ENCODE measurements at regions of chr1 and their contacts with region 1.

Region 1: GRCh38 chr1:226547754-226548191 is 791 bp upstream of the STUM start:
- DNase-seq: peak; percentile 85
- CTCF ChIP-seq: peak; percentile 89

Region 2: GRCh38 chr1:226453015-226453704 is 94.6 kb before region 1 on chr1:
- CTCF ChIA-PET with region 1: no interaction called
- POLR2A ChIA-PET with region 1: no interaction called
- DNase-seq: no peak
- CTCF ChIP-seq: no peak

Region 3: GRCh38 chr1:226535666-226536065 is 12.1 kb before region 1 on chr1:
- CTCF ChIA-PET with region 1: interaction called, 13 read pairs
- POLR2A ChIA-PET with region 1: no interaction called
- DNase-seq: no peak
- CTCF ChIP-seq: no peak

Measured in GM10248 (cell line).